ENCODE measurements at regions of chr19 and their contacts with region 1.

Region 1: DNA sequence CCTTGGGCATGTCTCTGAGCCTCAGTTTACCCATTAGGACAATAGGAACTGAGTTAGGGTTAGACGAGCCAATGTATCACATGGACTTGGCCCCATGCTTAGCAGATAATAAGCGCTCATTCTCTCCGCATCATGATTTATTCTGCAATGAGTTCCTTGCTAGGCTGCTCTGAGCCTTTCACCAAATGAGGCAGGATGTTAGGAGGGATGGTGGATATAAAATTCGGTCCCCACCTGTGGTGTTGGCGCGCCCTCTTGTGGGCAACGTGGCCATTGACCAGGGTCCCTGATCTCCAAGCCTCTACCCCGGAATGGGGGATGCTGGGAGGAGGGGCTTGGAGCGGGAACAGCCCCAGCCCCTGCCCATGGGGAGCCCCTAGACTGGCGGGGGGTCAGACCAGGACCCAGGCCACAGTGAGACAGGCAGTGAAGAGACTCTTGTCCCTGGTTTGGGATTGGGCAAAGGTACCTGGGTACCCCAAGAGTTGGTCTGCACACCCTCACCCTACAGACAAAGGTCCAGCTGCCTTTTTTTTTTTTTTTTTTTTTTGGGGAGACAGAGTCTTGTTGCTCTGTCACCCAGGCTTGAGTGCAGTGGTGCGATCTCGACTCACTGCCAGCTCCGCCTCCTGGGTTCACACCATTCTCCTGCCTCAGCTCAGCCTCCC is 43.9 kb downstream of the CERS4 start:
- DNase-seq: no peak
- H3K4me3 ChIP-seq: no peak overlapping the region
- CTCF ChIP-seq: peak; percentile 92

Region 2: GRCh38 chr19:8017808-8018207 is 235.2 kb before region 1 on chr19:
- CTCF ChIA-PET with region 1: no interaction called
- POLR2A ChIA-PET with region 1: no interaction called
- DNase-seq: no peak
- H3K4me3 ChIP-seq: no peak overlapping the region
- CTCF ChIP-seq: no peak

Region 3: GRCh38 chr19:8240274-8241229 is 12.5 kb before region 1 on chr19:
- CTCF ChIA-PET with region 1: interaction called, 16 read pairs
- POLR2A ChIA-PET with region 1: no interaction called
- DNase-seq: peak; percentile 65
- H3K4me3 ChIP-seq: no peak overlapping the region
- CTCF ChIP-seq: no peak